Caco-2 (cell line): ENCODE measurements at regions of chr22 and their contacts with region 1.

Region 1: DNA sequence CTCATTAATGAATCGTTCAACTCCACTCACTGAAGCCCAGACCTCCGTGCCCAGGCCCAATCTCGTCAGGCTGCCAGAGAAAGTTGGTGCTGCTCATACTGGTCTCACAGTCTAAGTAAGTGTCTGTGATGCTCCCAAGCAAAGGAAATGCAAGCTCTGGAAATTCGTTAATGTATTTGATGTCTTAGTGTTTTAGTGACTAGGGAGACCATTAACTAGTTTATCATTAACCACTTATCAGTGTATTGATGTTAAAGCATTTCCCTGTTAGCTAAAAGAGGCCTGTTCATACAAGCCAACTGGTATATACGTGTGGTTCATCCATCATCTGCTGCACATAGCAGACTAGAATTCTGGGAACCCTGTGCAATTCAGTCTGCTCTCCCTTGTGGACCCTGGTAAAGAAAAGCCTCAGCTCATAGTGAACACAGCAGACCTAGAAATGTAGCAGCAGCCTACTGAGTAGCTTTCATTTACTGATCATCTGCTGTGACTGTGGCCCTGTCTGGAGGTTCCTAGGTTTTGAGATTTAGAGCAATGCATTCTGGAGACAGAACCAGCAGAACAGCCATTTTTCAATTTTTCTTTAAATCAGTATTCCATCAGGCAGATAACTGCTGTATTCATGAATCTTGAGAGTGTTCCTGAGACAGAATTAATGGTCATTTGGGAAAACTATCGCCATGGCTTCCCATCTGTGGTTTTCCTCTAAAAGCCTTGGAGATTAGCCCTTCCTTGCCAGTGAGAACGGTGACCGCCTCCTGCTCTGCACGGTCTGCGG is 15.7 kb upstream of the AIFM3 start:
- DNase-seq: peak in 1 of 2 experiments; percentile 34
- H3K4me3 ChIP-seq: no peak overlapping the region
- H3K4me3 Mint-ChIP-seq: peak overlapping the region; percentile 22
- H3K27ac Mint-ChIP-seq: peak overlapping the region; percentile 88
- H3K4me1 ChIP-seq: peaks cover 69% of the 10 kb centered on the region
- H3K4me1 Mint-ChIP-seq: peaks cover 11% of the 10 kb centered on the region
- H3K27me3 ChIP-seq: no peaks in the 10 kb centered on the region
- H3K27me3 Mint-ChIP-seq: no peaks in the 10 kb centered on the region
- CTCF ChIP-seq: no peak

Region 2: DNA sequence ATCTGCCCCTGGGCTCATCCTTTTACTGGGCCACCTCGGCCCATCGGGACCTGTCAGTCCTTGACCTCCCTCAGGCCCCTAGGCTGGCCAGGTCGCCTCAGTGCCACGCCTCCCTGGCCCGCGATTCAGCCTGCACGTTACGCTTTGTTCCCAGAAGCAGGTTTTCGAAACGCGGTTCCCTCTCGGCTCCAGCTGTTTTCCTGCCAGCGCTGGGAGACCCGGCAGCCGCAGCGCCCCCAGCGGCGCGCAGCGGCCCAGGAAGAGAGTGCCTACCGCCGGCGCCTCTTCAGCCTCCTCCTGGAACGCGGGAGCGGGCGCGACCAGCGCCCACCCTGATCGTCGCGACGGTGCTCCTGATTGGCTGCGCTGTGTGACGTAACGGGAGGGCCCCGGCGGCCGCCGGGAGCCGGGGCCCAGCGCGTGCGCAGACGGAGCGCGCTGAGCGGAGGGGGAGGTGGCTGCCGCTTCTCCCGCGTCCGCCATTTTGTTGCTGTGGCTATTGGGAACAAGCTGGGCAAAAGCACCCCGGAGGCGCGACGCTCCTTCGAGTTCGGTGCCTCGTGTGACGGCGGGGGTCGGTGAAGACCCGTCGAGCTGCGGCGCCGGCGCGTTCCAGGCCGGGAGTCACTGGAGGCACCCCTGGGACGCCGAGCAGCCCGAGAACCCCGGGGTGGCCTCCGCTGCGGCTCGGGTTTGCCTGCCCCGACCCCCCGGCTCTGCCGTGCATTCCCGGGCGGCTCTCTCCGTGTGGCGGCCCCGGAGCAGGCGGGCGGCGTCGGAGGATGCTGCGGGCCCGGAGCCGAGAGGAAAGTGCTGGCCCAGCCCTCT is 34.1 kb before region 1 on chr22 and contains the start of gene CRKL:
- CTCF ChIA-PET with region 1: interaction called, 14 read pairs
- POLR2A ChIA-PET with region 1: interaction called, 10 read pairs
- intact Hi-C with region 1: loop called (anchors 2 kb)
- DNase-seq: peak; percentile 96 to 97
- H3K4me3 ChIP-seq: peak within 1 kb of the TSS; percentile 87
- H3K4me3 Mint-ChIP-seq: peak within 1 kb of the TSS; percentile 82
- H3K27ac Mint-ChIP-seq: peak within 1 kb of the TSS; percentile 82
- H3K4me1 ChIP-seq: peaks cover 24% of the 10 kb centered on the region
- H3K4me1 Mint-ChIP-seq: peaks cover 33% of the 10 kb centered on the region
- H3K27me3 ChIP-seq: no peaks in the 10 kb centered on the region
- H3K27me3 Mint-ChIP-seq: no peaks in the 10 kb centered on the region
- CTCF ChIP-seq: peak; percentile 81 to 96
- total RNA-seq, gene CRKL: 76.0 and 82.7 TPM in 2 replicates